ENCODE measurements at regions of chr5 and their contacts with region 1.

Region 1: DNA sequence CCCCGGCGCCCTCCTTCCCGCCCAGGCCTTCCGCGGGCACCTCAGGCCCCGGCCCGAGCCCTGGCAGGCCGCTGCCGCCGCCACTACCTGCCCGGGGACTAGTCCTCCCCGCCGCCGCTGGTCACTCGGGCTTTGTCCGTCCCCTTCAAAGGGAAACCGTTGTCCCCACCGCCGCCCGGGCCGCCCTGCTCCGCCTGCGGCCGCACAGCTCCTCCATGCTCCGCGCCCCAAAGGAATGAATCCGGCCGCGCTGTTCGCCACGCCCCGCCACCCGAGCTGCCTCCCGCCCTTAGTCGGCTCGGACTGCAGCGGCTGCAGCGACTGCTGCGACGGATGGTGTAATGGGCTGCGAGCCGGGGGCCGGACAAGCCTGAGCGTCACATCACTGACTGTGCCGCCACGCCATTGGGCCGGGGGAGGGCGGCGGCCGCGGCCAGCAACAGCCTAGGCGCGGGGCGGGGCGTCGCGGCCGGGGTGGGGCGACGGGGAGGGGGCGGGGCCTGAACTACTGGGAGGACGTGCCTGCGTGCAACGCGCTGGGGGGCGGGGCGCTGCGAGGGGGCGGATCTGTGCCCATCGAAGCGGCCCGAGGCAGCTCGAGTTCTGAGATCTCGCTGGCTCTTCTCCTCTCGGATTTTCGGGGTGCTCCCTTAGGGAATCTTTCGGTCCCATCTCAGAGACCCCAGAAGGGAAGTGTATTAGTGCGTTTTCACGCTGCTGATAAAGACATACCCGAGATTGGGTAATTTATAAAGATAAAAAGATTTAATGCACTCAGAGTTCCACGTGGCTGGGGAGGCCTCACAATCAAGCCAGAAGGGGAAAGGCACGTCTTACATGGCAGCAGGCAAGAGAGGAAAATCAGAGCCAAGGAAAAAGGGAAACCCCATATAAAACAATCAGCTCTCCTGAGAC is at the start of gene FEM1C:
- DNase-seq: peak; percentile 96
- H3K4me3 Mint-ChIP-seq: peak within 1 kb of the TSS; percentile 85
- H3K27ac Mint-ChIP-seq: peak within 1 kb of the TSS; percentile 97
- H3K4me1 Mint-ChIP-seq: peaks cover 7% of the 10 kb centered on the region
- H3K27me3 Mint-ChIP-seq: no peaks in the 10 kb centered on the region
- CTCF ChIP-seq: no peak
- total RNA-seq, gene FEM1C: 10.3 and 12.2 TPM in 2 replicates

Region 2: DNA sequence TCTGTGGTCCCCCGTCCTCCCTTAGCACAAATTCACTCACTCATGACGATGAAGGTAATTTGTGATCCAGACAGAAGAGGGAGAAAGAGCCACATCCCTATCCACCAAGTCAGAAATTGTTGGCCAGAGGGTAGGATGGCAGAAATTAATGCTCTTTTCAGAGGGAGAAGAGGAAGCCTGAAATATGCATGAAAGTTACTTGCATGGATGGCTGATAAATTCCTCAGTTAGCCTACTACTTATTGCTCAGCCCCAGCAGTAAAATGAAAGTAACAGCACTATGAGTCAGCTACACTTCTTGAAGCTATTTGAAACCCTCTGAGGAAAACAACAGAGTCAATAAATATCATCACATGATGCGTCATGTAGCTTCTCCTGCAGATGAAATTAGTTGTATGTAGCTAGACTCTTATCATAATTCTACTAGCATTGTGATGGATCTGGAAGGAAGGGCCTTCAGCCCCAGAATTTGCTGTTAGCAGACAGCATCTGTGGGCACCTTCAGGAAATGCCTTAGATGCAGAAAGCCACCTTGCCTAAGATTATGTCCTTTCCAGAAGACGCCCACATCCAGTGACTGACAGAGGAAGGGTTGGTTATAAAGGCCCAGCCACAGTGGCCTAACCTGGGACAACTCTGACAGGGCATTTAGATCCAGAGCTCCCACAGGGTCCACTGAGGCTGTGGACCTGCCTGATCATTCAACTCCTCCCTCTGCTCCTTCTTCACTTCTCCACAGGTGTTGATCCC is 167.1 kb before region 1 on chr5:
- CTCF ChIA-PET with region 1: interaction called, 26 read pairs
- POLR2A ChIA-PET with region 1: interaction called, 45 read pairs
- intact Hi-C with region 1: loop called (anchors 2 kb)
- DNase-seq: peak; percentile 59
- H3K4me3 Mint-ChIP-seq: peak overlapping the region; percentile 31
- H3K27ac Mint-ChIP-seq: peak overlapping the region; percentile 74
- H3K4me1 Mint-ChIP-seq: peaks cover 21% of the 10 kb centered on the region
- H3K27me3 Mint-ChIP-seq: no peaks in the 10 kb centered on the region
- CTCF ChIP-seq: peak; percentile 35

Region 3: DNA sequence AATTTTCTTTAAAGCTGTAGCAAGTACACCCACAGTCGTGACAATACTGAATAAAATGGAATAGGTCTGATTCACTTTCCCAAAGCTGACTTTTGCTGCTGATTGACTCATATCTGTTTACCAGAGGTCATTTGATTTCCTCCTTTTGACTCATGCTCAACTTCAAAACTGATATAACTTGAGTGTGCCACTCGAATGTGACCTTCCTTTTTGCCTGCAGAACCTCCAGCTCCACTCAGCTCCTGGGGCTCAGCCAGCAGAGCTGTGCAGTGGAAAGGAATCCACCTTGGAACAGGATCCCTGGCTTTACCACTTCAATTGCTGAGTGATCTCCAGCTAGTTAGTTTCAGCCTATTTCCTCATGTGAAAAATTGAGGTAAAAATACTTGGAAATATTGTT is 84.2 kb before region 1 on chr5:
- CTCF ChIA-PET with region 1: no interaction called
- POLR2A ChIA-PET with region 1: interaction called, 32 read pairs
- intact Hi-C with region 1: loop called (anchors 5 kb)
- DNase-seq: peak; percentile 70
- H3K4me3 Mint-ChIP-seq: no peak overlapping the region
- H3K27ac Mint-ChIP-seq: no peak overlapping the region
- H3K4me1 Mint-ChIP-seq: peaks cover 20% of the 10 kb centered on the region
- H3K27me3 Mint-ChIP-seq: no peaks in the 10 kb centered on the region
- CTCF ChIP-seq: no peak

Region 4: GRCh38 chr5:115524199-115524847 is 20.4 kb before region 1 on chr5:
- CTCF ChIA-PET with region 1: interaction called, 3 read pairs
- POLR2A ChIA-PET with region 1: interaction called, 21 read pairs
- intact Hi-C with region 1: no loop called
- DNase-seq: no peak
- H3K4me3 Mint-ChIP-seq: no peak overlapping the region
- H3K27ac Mint-ChIP-seq: no peak overlapping the region
- H3K4me1 Mint-ChIP-seq: peaks cover 22% of the 10 kb centered on the region
- H3K27me3 Mint-ChIP-seq: no peaks in the 10 kb centered on the region
- CTCF ChIP-seq: no peak

Region 5: GRCh38 chr5:115559524-115559923 is 14.8 kb after region 1 on chr5:
- CTCF ChIA-PET with region 1: interaction called, 6 read pairs
- POLR2A ChIA-PET with region 1: interaction called, 18 read pairs
- intact Hi-C with region 1: no loop called
- DNase-seq: no peak
- H3K4me3 Mint-ChIP-seq: no peak overlapping the region
- H3K27ac Mint-ChIP-seq: peak overlapping the region; percentile 74
- H3K4me1 Mint-ChIP-seq: peaks cover 26% of the 10 kb centered on the region
- H3K27me3 Mint-ChIP-seq: no peaks in the 10 kb centered on the region
- CTCF ChIP-seq: no peak

Region 6: DNA sequence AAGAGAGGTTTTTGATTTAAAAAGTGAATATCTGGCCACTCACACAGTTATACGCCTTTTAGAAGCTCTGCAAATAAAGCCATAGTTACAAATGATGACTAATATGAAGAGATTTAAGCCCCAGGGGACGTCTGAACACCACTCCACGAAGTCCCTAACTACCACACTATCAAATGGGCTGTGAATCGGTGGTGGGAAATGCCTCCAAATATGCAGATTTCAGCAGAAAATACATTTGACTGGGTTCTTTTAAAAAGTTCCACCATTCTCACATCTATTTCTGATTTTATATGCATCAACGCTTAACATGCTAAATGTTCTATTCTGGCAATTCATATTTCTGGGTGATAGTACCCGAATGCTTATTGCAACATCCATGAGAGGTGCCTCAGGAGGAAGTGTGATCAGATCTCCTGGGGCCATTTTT is 35.1 kb after region 1 on chr5:
- CTCF ChIA-PET with region 1: interaction called, 15 read pairs
- POLR2A ChIA-PET with region 1: interaction called, 23 read pairs
- intact Hi-C with region 1: loop called (anchors 2 kb)
- DNase-seq: peak; percentile 43
- H3K4me3 Mint-ChIP-seq: no peak overlapping the region
- H3K27ac Mint-ChIP-seq: no peak overlapping the region
- H3K4me1 Mint-ChIP-seq: peaks cover 12% of the 10 kb centered on the region
- H3K27me3 Mint-ChIP-seq: no peaks in the 10 kb centered on the region
- CTCF ChIP-seq: no peak

Region 7: DNA sequence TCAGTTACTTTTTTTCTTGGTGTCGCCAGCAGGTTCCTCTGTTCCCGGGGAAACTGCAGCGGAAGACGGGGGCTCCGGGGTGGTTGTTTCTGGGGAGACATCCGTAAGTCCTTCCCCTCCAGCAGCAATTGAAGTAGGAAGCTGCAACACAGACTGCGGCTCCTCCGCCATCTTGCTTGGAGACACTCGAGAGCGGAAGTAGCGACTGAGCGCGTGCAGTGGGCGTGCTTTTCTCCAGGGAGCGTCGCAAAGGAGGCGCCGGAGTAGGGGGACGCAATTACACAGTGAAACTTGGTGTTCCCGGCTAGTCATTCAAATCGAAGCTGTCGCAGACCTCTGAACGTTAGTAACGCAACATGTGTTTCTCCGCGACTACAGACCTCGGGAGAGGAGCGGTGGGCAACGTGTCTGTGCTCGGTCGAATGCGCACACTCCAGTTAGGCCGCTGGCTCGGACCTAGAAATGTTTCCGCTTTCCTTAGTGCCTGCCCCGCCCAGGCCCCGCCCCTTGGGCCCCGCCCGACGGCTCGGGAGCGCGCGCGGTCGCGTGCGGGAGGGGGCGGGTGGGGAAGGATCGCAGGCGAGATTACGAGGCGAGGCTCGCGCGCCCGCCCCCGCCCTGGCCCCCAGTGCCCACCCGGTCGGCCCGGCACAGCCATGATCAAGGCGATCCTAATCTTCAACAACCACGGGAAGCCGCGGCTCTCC is 296.8 kb after region 1 on chr5 and contains the starts of genes AP3S1 and ATG12:
- CTCF ChIA-PET with region 1: interaction called, 4 read pairs
- POLR2A ChIA-PET with region 1: interaction called, 12 read pairs
- intact Hi-C with region 1: no loop called
- DNase-seq: peak; percentile 94
- H3K4me3 Mint-ChIP-seq: peak within 1 kb of the TSS; percentile 77
- H3K27ac Mint-ChIP-seq: peak within 1 kb of the TSS; percentile 97
- H3K4me1 Mint-ChIP-seq: peaks cover 25% of the 10 kb centered on the region
- H3K27me3 Mint-ChIP-seq: no peaks in the 10 kb centered on the region
- CTCF ChIP-seq: no peak
- total RNA-seq, gene AP3S1: 94.6 and 102 TPM in 2 replicates
- total RNA-seq, gene ATG12: 42.6 and 46.3 TPM in 2 replicates